ENCODE measurements at regions of chr11 and their contacts with region 1.

Region 1: GRCh38 chr11:23729088-23729487 is 767.8 kb upstream of the LUZP2 start:
- DNase-seq: no peak
- H3K4me3 ChIP-seq: no peak overlapping the region
- H3K27me3 ChIP-seq: no peaks in the 10 kb centered on the region
- CTCF ChIP-seq: no peak

Region 2: GRCh38 chr11:23749762-23750430 is 20.8 kb after region 1 on chr11:
- CTCF ChIA-PET with region 1: no interaction called
- POLR2A ChIA-PET with region 1: interaction called, 17 read pairs
- DNase-seq: no peak
- H3K4me3 ChIP-seq: no peak overlapping the region
- H3K27me3 ChIP-seq: no peaks in the 10 kb centered on the region
- CTCF ChIP-seq: no peak

Region 3: GRCh38 chr11:23789938-23790371 is 60.9 kb after region 1 on chr11:
- CTCF ChIA-PET with region 1: no interaction called
- POLR2A ChIA-PET with region 1: no interaction called
- DNase-seq: no peak
- H3K4me3 ChIP-seq: no peak overlapping the region
- H3K27me3 ChIP-seq: no peaks in the 10 kb centered on the region
- CTCF ChIP-seq: no peak

Measured in BJ (cell line).